T-cell (primary cell): ENCODE measurements at regions of chr6 and their contacts with region 1.

Region 1: GRCh38 chr6:15441215-15441868 is 195.5 kb downstream of the JARID2 start:
- DNase-seq: peak in 21 of 35 experiments; percentile 1 to 72 (median 20)
- ATAC-seq: peak; percentile 41 to 61 (median 52)
- H3K4me3 ChIP-seq: no peak overlapping the region
- H3K4me3 Mint-ChIP-seq: no peak overlapping the region
- H3K27ac ChIP-seq: no peak overlapping the region
- H3K27ac Mint-ChIP-seq: no peak overlapping the region
- H3K4me1 ChIP-seq: peaks cover 32 to 34% of the 10 kb centered on the region in 2 experiments
- H3K4me1 Mint-ChIP-seq: peaks cover 66 to 73% (median 72%) of the 10 kb centered on the region in 3 donors
- H3K27me3 ChIP-seq: no peaks in the 10 kb centered on the region
- H3K27me3 Mint-ChIP-seq: no peaks in the 10 kb centered on the region

Region 2: DNA sequence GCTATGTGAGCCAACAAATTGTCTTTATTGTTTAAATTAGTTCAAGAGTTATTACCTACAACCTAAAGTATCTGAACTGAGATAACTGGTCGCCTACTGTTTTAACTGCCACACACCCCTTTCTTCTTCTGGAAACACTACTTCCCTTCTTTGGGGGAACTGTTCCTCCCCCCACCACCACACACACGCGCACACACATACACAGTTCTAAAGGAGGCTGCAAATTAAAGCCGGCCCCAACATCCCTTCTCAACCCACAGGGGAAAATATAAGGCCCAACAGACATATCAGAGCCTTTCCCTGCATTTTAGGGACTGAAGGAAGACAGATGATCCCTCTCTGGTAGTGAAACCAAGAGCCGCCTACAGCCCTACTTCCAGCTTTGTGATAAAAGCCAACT is 543.5 kb before region 1 on chr6:
- CTCF ChIA-PET with region 1: no interaction called
- POLR2A ChIA-PET with region 1: no interaction called
- DNase-seq: no peak
- ATAC-seq: no peak
- H3K4me3 ChIP-seq: no peak overlapping the region
- H3K4me3 Mint-ChIP-seq: no peak overlapping the region
- H3K27ac ChIP-seq: no peak overlapping the region
- H3K27ac Mint-ChIP-seq: no peak overlapping the region
- H3K4me1 ChIP-seq: no peaks in the 10 kb centered on the region
- H3K4me1 Mint-ChIP-seq: peaks cover 0 to 6% (median 0%) of the 10 kb centered on the region in 3 donors
- H3K27me3 ChIP-seq: no peaks in the 10 kb centered on the region
- H3K27me3 Mint-ChIP-seq: no peaks in the 10 kb centered on the region

Region 3: DNA sequence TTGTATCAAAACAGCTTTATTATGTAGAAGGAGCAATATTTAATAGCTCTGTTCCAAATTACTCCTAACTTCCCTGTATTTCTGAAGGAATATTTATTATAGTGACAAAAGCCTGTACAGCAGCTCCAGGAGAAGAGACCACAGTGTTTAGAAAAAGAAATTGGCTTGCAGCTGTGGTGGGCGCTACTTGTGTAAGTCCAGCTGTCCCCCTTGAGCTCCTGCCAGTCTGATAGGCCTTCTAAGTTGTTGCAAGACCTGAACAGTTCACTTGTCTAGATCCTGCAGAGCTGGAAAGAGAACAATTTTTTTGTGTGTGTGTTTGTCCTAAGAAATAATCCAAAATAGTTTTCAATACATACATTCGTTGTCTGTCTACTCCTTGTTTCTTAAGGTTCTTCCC is 108.9 kb before region 1 on chr6:
- CTCF ChIA-PET with region 1: interaction called in 1 of 2 experiments, 3 read pairs
- POLR2A ChIA-PET with region 1: interaction called, 6 to 10 read pairs
- DNase-seq: no peak
- ATAC-seq: no peak
- H3K4me3 ChIP-seq: no peak overlapping the region
- H3K4me3 Mint-ChIP-seq: no peak overlapping the region
- H3K27ac ChIP-seq: no peak overlapping the region
- H3K27ac Mint-ChIP-seq: no peak overlapping the region
- H3K4me1 ChIP-seq: peaks cover 21 to 34% of the 10 kb centered on the region in 2 experiments
- H3K4me1 Mint-ChIP-seq: peaks cover 89 to 93% (median 90%) of the 10 kb centered on the region in 3 donors
- H3K27me3 ChIP-seq: no peaks in the 10 kb centered on the region
- H3K27me3 Mint-ChIP-seq: no peaks in the 10 kb centered on the region